GM10248 (cell line): ENCODE measurements at regions of chr13 and their contacts with region 1.

Region 1: DNA sequence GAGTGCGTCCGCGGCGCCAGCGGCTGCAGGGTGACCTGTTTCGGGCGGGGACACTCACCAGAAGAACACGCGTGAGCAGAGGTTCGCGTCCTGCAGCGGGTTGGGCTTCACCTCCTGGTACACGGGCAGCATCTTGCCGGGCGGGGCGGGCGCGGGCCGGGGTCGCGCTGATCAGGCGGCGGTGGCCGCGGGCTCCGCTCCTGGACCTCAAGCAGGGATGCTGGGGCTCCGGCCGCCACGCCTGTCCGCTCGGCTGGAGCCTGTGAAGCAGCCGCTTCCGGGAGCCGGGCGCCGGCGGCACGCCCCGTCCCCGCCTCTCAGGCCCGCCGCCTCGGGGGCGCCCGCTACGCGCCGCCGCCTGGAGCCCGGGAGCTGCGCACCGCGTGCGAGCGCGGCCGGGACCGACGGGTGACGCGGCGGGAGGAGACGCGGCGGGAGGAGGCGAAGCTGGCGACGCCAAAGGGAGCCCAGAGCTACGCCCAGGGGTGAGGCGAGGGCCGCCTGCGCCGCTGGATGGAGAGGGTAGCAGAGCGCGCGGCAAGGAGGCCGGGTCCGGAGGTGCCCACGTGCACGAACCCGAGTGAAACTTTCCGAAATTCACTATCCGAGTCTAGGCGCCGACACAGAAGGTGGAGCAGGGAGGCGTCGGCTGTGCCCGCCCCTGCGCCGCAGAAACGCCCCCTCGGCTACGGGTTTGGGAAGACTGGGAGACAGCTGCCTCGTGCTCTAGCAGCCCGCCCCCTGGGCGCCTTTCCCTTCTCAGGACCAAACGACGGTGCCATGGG is at the start of gene ABCC4:
- DNase-seq: peak; percentile 90
- CTCF ChIP-seq: no peak

Region 2: DNA sequence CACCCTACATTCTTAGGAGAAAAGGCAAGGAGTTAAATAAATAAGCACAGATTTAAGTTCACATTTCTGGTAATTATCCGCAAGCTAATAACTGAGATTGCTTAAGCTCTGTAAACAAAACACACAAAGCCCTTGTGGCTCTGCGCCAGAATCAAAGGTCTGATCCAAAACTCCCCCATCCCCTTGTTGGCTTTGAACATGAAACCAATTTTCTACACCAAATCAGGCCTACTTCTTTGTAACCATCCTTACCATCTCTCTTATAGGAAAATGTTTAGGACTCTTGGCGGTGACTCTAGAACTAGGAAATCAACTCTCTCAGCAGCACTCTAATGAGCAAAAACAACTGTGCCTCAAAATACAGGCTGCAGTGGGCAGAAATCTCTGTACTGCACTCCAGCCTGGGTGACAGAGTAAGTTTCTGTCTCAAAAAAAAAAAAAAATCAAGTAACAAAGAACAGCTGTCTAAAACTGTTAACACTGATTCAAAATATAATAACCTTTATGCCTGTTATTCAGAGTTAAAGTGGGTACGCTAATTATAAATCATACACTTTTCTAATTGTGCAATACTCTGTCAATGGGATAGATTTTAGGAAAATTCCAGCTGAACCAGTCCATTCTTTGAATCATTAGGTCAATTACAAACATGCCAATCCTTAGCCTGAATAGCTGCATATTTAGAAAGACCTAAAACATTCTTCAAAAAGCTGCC is 25.9 kb before region 1 on chr13:
- CTCF ChIA-PET with region 1: interaction called, 23 read pairs
- POLR2A ChIA-PET with region 1: no interaction called
- DNase-seq: no peak
- CTCF ChIP-seq: no peak

Region 3: DNA sequence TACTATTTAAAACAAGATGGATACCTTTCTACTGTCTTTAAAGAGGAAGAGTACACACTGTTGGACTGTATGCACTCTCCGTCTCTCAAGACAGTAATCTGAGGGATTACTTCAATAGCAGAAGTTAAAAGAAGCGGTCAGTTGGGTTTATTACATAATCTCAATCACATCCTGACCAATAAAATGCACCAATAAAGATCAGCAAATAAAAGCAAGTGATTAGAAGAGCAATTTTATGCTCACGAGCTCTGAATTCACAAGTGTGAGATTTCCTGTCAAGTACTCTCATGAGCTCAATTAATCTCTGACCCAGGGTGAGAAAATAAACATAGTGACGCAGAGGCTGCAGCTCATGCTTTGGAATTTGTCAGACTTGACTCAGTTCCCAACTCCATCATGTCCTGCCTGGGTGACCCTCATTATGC is 12.3 kb before region 1 on chr13:
- CTCF ChIA-PET with region 1: interaction called, 29 read pairs
- POLR2A ChIA-PET with region 1: no interaction called
- DNase-seq: no peak
- CTCF ChIP-seq: no peak

Region 4: DNA sequence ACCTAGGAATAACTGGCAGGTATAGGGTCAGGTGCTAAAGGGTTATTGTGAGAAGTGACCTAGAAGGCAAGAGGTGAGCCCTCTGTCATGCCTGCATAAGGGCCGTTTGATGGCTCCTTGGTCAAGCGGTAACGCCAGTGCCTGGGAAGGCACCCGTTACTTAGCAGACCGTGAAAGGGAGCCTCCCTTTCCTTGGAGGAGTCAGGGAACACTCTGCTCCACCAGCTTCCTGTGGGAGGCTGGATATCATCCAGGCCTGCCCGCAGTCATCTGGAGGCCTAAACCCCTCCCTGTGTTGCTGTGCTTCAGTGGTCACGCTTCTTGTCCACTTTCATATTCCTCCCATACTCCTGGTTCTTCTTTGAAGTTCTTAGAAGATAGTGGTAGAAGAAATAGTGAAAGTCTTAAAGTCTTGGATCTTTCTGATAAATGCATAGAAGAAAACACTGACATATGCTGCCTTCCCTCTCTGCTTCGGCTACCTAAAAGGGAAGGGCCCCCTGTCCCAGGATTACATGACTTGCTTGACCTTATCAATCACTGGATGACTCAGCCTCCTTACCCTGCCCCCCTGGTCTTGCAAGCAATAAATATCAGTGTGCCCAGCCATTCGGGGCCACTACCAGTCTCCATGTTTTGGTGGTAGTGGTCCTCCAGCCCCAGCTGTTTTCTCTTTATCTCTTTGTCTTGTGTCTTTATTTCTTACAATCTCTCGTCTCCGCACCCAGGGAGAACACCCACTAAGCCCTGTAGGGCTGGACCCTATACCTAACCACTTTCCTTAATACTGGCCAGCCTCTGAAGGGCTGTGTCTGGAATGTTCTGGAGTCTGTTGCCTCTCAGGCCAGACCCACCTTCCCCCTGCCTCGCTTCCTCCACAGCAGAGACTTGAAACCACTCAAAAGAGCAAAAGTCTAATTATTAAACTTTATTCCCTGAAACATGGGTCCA is 15.9 kb after region 1 on chr13:
- CTCF ChIA-PET with region 1: interaction called, 23 read pairs
- POLR2A ChIA-PET with region 1: no interaction called
- DNase-seq: no peak
- CTCF ChIP-seq: no peak

Region 5: GRCh38 chr13:95378603-95379002 is 77.2 kb after region 1 on chr13:
- CTCF ChIA-PET with region 1: interaction called, 19 read pairs
- POLR2A ChIA-PET with region 1: no interaction called
- DNase-seq: no peak
- CTCF ChIP-seq: no peak

Region 6: DNA sequence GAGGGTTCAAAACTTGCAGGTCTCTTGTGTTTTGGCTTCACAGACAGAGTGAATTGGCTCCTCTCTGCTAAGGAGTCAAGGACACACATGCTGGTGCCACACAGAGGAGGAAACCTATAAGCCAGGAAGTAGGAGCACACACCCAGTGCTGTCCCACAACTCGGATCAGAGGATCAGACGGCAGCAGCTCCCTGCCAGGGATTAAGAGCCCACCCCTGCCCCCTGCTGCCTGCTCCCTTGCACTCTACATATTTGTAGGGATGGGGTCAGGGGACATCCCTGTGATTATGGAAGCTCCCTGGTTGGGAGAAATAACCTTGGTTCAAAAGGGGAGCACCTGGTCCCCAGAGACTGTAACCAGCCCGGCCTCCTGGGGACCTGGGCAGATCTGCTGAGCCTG is 173.6 kb after region 1 on chr13:
- CTCF ChIA-PET with region 1: interaction called, 10 read pairs
- POLR2A ChIA-PET with region 1: no interaction called
- DNase-seq: no peak
- CTCF ChIP-seq: no peak